Cardiac septum (tissue), 1 donor: ENCODE measurements at regions of chr19 and their contacts with region 1.

Region 1: DNA sequence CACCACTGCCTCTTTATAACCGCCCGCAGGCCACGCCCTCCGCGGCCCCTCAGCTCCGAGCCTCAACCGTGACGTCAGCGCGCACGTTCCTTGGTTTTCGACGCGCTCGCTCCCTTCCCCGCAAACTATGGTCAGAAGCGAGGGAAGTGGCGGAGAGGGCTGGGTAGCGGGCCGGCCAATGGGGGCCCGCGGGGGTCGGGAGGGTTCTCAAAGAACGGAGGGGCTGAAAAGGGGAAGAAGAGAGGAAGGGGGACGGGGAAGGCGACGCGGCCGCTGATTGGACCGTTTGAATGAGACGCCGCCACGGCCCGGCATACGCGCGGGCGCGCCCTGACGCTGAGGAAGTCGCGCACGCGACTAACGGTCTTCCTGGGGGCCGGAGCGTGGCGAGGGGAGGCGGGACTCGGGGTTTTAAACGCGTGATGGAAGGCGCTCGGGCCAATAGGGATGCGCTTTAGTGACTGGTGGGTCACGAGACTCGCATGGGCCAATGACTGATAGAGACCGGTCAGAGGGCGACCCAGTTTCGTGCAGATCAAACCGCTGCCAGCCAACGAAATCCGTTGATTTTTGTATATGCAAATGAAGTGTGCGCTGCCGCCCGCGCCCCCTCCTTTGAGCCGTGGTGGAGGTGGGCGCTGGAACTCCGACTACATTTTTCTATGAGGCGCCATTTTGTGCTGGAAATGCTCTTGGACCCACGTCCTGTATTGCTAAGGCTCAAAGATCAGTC is 378 bp upstream of the UBE2S start:
- DNase-seq: peak; percentile 99

Region 2: GRCh38 chr19:55117636-55118391 is 290.2 kb before region 1 on chr19 and contains the start of gene PPP1R12C:
- intact Hi-C with region 1: no loop called
- DNase-seq: peak; percentile 100
- total RNA-seq, gene PPP1R12C: 215 TPM

Region 3: DNA sequence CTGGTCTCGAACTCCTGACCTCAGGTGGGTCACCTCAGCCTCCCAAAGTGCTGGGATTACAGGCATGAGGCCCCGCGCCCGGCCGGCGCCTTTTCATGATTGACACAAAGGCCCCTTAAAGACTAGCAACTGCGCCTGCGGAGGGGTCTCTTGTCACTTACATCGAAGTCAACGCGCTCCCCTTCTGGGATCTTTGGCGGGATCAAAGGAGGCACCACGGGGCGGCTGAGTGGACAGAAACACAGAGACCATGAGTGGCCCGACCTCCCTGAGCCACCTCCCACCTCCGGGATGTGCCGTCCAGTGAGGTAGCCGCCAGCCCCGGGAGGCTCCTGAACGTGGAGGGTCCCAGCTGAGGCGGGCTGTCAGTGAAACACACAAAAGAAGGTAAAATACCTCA is 266.3 kb before region 1 on chr19:
- intact Hi-C with region 1: loop called (anchors 5 kb)
- DNase-seq: no peak

Region 4: GRCh38 chr19:55385740-55386529 is 22.0 kb before region 1 on chr19 and contains the start of gene RPL28:
- intact Hi-C with region 1: loop called (anchors 2 kb)
- DNase-seq: peak; percentile 99
- total RNA-seq, gene RPL28: 479 TPM

Region 5: GRCh38 chr19:55461259-55461973 is 53.5 kb after region 1 on chr19 and contains the start of gene ISOC2:
- intact Hi-C with region 1: loop called (anchors 5 kb)
- DNase-seq: peak; percentile 100
- total RNA-seq, gene ISOC2: 50.8 TPM